ENCODE measurements at regions of chr1 and their contacts with region 1.

Region 1: DNA sequence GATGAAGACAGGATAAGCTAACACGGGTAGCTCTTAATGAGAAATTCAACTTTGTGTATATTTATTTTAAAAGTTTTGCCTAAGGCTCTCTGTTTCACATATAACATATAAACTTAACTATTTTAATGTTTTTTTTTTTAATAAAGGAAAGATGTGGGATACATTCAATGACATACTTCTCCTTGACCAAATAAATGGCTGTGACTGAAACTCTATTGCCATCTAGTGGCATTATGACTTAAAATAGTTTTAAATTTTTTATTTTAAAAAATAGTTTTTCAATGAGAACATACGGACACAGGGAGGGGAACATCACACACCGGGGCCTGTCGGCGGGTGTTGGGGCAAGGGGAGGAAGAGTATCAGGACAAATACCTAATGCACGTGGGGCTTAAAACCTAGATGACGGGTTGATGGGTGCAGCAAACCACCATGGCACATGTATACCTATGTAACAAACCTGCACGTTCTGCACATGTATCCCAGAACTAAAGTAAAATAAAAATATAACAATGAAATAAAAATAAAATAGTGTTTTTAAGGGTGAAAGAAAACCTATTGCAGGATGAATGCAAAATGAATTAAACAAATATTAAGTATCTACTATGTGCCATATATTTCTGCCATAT is 83.4 kb downstream of the LYST start:
- DNase-seq: no peak
- H3K4me3 ChIP-seq: no peak overlapping the region
- CTCF ChIP-seq: no peak

Region 2: DNA sequence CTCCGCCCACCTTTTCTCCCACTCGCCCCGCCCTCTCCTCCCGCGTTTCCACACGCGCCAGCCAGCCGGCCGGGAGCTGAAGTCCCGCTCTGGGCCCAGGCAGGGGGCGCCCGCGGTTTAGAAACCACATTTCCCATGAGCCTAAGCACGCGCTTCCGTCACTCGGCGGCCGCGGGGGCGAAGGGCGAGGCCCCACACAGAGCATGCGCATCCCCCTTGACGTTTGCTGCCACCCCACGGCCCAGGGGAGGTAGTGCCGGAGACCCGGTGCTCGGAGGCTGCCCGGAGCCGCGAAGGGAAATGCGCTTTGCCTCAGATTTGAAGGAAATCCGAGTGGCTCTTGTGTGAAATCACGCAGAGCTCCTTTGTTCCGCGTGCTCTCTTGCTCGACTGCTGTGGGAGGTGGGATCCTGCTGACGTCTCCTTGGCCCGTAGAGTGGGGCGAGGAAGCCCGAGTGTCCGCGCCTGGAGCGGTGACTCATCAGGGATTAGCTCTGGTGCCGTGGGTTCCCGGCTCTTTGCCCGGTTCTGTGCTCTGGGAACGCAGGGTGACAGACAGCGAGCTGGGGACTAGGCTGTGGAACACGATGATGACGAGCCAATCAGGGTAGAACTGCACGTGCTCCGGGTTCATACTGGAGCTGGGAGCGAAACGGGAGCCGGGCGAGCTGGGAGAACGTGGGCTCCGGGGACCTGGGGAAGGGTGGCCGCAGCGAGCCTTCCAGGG is 278.6 kb before region 1 on chr1:
- CTCF ChIA-PET with region 1: interaction called, 75 read pairs
- POLR2A ChIA-PET with region 1: no interaction called
- DNase-seq: peak; percentile 91
- H3K4me3 ChIP-seq: peak overlapping the region; percentile 90
- CTCF ChIP-seq: peak; percentile 87

Region 3: DNA sequence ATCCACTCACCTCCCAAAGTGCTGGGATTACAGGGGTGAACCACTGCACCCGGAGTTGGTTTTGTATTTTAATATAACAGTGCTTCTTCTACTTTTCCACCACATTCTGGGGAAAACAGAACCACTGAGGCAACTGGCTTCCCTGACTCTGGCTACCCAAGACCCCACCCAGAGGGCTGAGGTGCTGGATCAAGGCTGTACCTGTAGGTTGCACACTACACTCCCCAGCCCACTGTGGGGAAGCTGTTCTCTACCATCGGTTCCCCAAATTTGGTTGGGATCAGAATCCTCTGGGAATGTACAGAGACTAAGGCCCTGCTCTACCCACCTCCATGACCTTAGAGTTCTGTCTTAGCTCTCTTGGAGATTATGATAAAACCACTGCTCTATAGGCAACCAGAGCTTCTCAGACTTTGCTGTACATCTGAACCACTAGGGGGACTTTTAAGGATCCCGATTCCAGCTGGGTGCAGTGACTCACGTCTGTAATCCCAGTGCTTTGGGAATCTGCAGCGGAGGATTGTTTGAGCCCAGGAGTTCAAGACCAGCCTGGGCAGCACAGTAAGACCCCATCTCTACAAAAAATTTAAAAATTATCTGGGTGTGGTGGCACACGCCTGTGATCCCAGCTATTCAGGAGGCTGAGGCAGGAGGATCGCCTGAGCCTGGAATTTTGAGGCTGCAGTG is 185.3 kb before region 1 on chr1:
- CTCF ChIA-PET with region 1: interaction called, 50 read pairs
- POLR2A ChIA-PET with region 1: no interaction called
- DNase-seq: no peak
- H3K4me3 ChIP-seq: no peak overlapping the region
- CTCF ChIP-seq: peak; percentile 45

Region 4: GRCh38 chr1:235757587-235758096 is 25.6 kb before region 1 on chr1:
- CTCF ChIA-PET with region 1: interaction called, 11 read pairs
- POLR2A ChIA-PET with region 1: no interaction called
- DNase-seq: no peak
- H3K4me3 ChIP-seq: no peak overlapping the region
- CTCF ChIP-seq: no peak

Region 5: GRCh38 chr1:235843461-235843961 is 60.2 kb after region 1 on chr1:
- CTCF ChIA-PET with region 1: interaction called, 19 read pairs
- POLR2A ChIA-PET with region 1: no interaction called
- DNase-seq: no peak
- H3K4me3 ChIP-seq: no peak overlapping the region
- CTCF ChIP-seq: peak; percentile 53

Measured in AG04449 (cell line).